GM18951 (cell line): ENCODE measurements at regions of chr6 and their contacts with region 1.

Region 1: DNA sequence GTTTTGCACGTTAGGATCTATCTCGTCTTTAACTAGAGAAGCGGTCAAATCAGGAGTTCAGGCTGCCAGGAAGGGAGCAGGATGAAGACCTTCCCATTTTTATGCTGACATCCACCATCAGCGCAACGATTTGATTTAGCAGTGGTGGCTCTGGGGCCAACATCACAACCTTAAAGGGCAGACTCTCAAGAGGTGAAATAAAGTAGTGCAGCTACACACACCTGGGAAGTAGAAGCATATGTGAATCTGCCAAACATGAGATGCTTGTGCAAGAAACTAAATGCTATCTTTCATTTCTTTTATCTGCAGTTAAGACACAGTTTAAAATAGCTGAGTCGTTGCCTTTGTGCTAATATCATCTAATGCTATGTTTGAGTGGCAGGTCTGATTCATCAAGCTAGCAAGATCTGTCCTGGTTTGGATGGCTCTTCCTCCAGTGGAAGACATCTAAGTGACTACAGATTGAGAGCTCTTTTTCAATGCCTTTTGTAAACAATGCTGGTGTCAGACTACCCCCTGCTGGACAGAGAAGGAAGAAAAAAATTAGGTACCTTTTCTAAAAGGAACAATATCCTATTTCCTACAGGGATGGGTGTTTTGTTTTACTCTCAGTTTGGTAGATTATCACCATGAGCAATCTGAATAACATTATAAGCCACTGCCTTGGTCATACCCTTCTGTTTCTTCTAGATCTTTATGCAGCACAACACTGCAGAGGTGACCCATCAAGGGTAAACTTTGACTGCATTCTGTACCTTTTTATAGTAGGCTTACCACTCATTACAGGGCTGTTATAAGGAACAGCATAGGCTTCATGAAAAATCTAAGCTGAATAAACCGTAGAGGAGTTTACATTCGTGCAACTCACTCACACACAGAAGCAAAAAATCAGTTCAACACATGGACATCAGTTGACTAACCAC is 171.6 kb upstream of the FBXL4 start:
- POLR2A ChIP-seq: no peak

Region 2: DNA sequence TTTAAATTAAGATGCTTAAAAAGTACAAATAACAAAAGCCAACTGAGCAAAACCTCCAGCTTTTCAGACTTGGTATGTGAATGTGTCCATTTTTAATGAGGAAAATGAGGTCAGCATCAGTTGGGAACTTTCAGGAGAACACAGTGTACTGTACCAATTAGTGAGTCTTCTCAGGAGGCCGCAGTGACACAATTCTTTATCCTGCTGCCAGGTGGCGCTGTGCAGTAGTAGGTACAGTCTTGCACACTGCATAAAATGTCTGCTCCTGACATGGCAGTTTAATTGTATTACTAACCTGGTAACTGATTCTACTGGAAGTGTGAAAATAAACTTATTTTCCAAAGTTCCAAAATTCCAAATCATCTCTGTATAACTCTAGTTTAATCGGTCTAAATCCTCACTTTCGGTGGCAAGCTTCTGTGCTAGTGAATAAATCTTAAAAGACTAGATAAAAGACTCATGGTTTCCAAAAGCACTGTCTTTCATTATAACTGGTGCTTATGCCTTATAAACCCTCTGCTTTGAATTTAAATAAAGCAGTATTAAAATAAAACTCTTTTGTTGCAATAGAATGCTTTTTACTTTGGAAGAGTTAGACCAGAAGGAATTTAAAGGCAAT is 1621.5 kb before region 1 on chr6:
- in situ Hi-C with region 1: loop called (anchors 25 kb)
- POLR2A ChIP-seq: no peak

Region 3: DNA sequence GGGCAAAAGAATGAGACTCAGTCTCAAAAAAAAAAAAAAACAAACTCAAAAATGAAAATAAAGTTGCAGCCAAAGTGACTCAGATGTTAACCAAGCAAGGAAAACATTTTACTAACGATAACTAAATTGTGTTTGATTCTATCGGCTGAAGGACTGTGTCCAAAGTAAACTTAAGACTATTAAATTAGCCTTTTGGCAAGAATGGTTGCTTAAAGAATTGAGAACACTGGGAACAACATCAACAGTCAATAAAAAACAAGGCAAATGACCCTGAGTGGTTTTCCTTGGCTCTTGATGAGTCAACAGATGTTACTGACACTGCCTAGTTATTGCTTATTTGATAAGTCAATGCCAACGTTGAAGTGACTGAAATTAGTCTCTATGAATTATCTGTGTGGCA is 248.3 kb before region 1 on chr6:
- in situ Hi-C with region 1: loop called (anchors 25 kb)
- POLR2A ChIP-seq: no peak